Activated B cell treated with CpG ODN at 0.5 μM for 24 hours (primary cell): ENCODE measurements at regions of chr11 and their contacts with region 1.

Region 1: DNA sequence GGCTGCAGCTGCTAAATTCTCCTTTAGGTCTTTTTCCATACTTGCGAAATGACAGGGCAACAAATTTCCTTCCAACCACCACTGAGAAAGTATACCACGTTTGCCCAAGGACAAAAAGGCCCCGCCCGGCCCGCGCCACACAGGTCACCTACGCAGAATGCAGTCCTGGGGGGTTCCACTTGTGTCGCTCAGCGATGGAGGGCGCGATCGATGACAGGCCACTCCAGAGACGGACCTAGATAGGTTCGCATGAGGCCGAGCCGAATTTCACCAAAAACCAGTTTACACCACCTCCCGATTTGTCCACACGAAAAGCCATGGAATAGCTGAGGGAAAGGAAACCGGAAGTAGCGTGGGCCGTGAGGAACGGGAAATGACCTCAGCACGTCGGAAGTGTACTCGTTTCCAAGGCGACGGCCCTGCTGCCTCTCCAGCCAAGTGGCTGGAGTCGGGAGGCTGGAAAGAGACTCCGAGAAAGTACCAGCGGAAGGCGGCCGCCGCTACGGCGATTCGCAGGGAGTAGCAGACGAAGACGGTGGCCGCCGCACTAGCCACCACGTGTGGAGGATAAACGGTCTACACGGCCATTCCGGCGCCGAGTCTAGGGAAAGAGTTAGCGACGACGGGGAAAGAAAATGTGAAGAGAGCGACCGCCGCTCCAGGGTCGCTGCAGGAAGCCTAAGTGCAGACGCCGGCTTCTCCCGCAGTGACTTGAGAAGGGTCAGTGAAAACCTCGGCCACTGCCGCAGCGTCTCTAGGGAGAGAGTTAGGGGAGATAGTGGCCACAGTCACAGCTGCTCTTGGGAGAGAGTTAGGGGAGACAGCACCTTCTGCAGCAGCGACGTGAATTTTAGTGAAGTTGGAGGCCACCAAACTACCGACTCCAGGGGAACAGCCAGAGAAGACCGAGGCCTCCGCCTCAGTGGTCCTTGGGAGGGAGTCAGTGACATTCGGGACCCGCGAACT is at the start of gene ANKRD42:
- DNase-seq: peak; percentile 75
- ATAC-seq: peak; percentile 63
- H3K4me3 Mint-ChIP-seq: peak within 1 kb of the TSS; percentile 100
- H3K27ac Mint-ChIP-seq: peak within 1 kb of the TSS; percentile 98
- H3K4me1 Mint-ChIP-seq: peaks cover 51% of the 10 kb centered on the region
- H3K27me3 Mint-ChIP-seq: no peaks in the 10 kb centered on the region
- CTCF ChIP-seq: no peak
- total RNA-seq, gene ANKRD42: 6.6 and 7.4 TPM in 2 replicates

Region 2: GRCh38 chr11:82790723-82791484 is 402.7 kb before region 1 on chr11:
- CTCF ChIA-PET with region 1: no interaction called
- POLR2A ChIA-PET with region 1: no interaction called
- intact Hi-C with region 1: no loop called
- DNase-seq: no peak
- ATAC-seq: no peak
- H3K4me3 Mint-ChIP-seq: no peak overlapping the region
- H3K27ac Mint-ChIP-seq: no peak overlapping the region
- H3K4me1 Mint-ChIP-seq: no peaks in the 10 kb centered on the region
- H3K27me3 Mint-ChIP-seq: no peaks in the 10 kb centered on the region
- CTCF ChIP-seq: no peak

Region 3: DNA sequence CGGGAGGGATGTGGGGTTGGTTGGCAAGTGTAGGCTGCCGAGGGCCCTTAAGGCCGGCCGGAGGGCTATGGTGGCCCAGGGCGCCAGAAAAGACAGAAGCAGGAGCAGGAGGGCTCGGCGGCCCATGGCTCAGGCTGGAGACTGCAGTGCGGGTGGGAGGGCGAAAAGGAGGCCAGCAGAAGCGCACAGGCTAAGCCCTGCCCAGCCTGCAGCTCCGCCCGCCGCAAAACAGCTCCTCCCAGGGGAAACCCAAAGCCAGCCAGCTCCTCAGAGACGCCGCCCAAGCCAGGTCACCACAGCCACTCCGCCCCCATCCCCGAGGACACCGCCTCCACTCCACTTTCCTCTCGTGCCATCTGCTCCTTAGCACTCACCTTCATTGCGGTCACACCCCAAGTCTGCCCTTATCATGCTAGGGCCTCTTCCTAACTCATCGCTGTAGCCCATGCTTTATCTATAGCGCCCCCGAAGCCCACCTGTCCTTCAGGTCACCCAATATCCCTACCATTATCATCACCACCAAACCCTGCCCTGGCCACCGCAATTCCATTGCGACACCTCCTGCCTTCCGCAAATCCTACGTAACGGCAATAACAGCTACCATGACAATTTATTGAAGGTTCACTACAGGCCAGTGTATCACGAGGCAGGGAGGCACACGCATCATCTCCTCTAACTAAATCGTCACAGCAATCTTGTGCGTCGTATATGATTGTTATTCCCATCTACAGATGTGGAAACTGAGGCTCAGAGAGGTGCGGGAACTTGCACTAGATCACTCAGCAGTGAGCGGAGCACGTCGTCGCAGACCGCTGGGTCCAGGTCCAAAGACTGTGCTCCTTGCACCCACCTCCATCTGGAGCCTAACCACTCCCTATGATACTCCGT is 293.1 kb before region 1 on chr11 and contains the start of gene PRCP:
- CTCF ChIA-PET with region 1: no interaction called
- POLR2A ChIA-PET with region 1: interaction called, 17 read pairs
- intact Hi-C with region 1: loop called (anchors 1 kb)
- DNase-seq: peak; percentile 78
- ATAC-seq: peak; percentile 75
- H3K4me3 Mint-ChIP-seq: peak within 1 kb of the TSS; percentile 100
- H3K27ac Mint-ChIP-seq: peak within 1 kb of the TSS; percentile 99
- H3K4me1 Mint-ChIP-seq: peaks cover 57% of the 10 kb centered on the region
- H3K27me3 Mint-ChIP-seq: no peaks in the 10 kb centered on the region
- CTCF ChIP-seq: no peak
- total RNA-seq, gene PRCP: 29.8 and 34.8 TPM in 2 replicates

Region 4: GRCh38 chr11:82996966-82997606 is 196.5 kb before region 1 on chr11:
- CTCF ChIA-PET with region 1: interaction called, 3 read pairs
- POLR2A ChIA-PET with region 1: no interaction called
- intact Hi-C with region 1: loop called (anchors 1 kb)
- DNase-seq: no peak
- ATAC-seq: peak; percentile 88
- H3K4me3 Mint-ChIP-seq: peak overlapping the region; percentile 75
- H3K27ac Mint-ChIP-seq: peak overlapping the region; percentile 84
- H3K4me1 Mint-ChIP-seq: peaks cover 93% of the 10 kb centered on the region
- H3K27me3 Mint-ChIP-seq: no peaks in the 10 kb centered on the region
- CTCF ChIP-seq: no peak

Region 5: GRCh38 chr11:83147895-83148294 is 45.7 kb before region 1 on chr11:
- CTCF ChIA-PET with region 1: no interaction called
- POLR2A ChIA-PET with region 1: no interaction called
- intact Hi-C with region 1: no loop called
- DNase-seq: no peak
- ATAC-seq: no peak
- H3K4me3 Mint-ChIP-seq: no peak overlapping the region
- H3K27ac Mint-ChIP-seq: no peak overlapping the region
- H3K4me1 Mint-ChIP-seq: no peaks in the 10 kb centered on the region
- H3K27me3 Mint-ChIP-seq: no peaks in the 10 kb centered on the region
- CTCF ChIP-seq: no peak

Region 6: DNA sequence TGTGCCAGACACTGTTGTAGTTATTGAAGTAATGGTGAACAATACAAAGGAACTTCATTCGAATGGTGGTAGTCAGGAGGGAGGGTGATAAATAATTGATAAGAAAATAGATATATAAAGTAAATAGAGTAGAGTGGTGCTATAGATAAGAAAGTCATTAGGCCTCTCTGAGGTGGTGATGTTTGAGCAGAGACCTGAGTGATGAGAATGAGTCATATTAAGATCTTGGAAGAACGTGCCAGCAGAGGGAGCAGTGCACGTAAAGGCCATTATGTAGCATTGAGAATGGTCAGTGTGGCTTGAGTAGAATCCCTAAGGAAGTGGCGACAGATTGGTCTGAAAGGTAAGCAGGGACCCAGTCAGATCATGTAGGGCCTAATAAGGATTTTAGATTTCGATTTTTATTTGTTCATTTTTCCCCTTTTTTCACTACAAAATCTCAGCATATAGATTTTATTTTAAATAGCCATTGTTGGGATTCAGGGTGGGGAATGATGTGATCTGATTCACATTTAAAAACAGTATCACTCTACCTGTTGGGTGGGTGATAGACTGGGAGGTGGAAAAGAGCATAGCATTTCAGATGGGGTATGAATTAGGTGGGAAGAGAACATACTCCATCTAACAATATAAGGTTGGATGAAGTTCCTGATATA is 47.8 kb after region 1 on chr11:
- CTCF ChIA-PET with region 1: no interaction called
- POLR2A ChIA-PET with region 1: no interaction called
- intact Hi-C with region 1: loop called (anchors 5 kb)
- DNase-seq: no peak
- ATAC-seq: peak; percentile 47
- H3K4me3 Mint-ChIP-seq: no peak overlapping the region
- H3K27ac Mint-ChIP-seq: no peak overlapping the region
- H3K4me1 Mint-ChIP-seq: no peaks in the 10 kb centered on the region
- H3K27me3 Mint-ChIP-seq: no peaks in the 10 kb centered on the region
- CTCF ChIP-seq: no peak

Region 7: DNA sequence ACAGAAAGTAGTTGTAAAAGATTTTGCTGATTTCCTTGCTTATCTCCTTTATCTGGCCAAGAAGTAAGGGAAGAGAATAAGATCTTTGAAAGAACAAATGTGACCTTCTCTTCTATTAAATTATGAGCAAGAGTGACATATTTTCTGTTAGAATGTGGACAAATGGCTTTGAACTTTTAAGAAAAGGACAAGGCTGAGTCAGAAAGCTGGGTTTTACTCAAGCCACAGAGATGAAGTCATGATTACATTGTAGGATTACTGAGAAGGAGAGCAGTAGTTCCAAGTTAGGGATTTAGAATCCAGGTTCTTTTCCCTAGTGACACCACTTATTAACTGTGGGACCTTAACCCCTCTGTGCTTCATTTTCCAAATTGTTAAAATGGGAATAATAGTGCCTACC is 79.0 kb after region 1 on chr11:
- CTCF ChIA-PET with region 1: no interaction called
- POLR2A ChIA-PET with region 1: no interaction called
- intact Hi-C with region 1: no loop called
- DNase-seq: no peak
- ATAC-seq: no peak
- H3K4me3 Mint-ChIP-seq: no peak overlapping the region
- H3K27ac Mint-ChIP-seq: no peak overlapping the region
- H3K4me1 Mint-ChIP-seq: peaks cover 15% of the 10 kb centered on the region
- H3K27me3 Mint-ChIP-seq: no peaks in the 10 kb centered on the region
- CTCF ChIP-seq: no peak

Region 8: GRCh38 chr11:83285771-83286528 is 92.4 kb after region 1 on chr11 and contains the start of gene CCDC90B:
- CTCF ChIA-PET with region 1: no interaction called
- POLR2A ChIA-PET with region 1: interaction called, 6 read pairs
- intact Hi-C with region 1: loop called (anchors 1 kb)
- DNase-seq: peak; percentile 86
- ATAC-seq: peak; percentile 88
- H3K4me3 Mint-ChIP-seq: peak within 1 kb of the TSS; percentile 99
- H3K27ac Mint-ChIP-seq: peak within 1 kb of the TSS; percentile 100
- H3K4me1 Mint-ChIP-seq: peaks cover 61% of the 10 kb centered on the region
- H3K27me3 Mint-ChIP-seq: no peaks in the 10 kb centered on the region
- CTCF ChIP-seq: no peak
- total RNA-seq, gene CCDC90B: 25.8 and 29.2 TPM in 2 replicates